HepG2 (cell line): ENCODE measurements at regions of chr19 and their contacts with region 1.

Region 1: GRCh38 chr19:50357178-50358100 is 8.0 kb downstream of the NAPSA start:
- DNase-seq: peak; percentile 52
- ATAC-seq: peak; percentile 81
- H3K4me3 ChIP-seq: peak overlapping the region; percentile 39 to 72 (median 56); a peak in 5 of 6 replicates
- H3K27ac ChIP-seq: no peak overlapping the region
- H3K4me1 ChIP-seq: peaks cover 11% of the 10 kb centered on the region; the same call in 1 of the 2 replicates
- H3K27me3 ChIP-seq: no peaks in the 10 kb centered on the region
- CTCF ChIP-seq: peak; percentile 91
- EP300 ChIP-seq: no peak
- POLR2A ChIP-seq: no peak
- RAD21 ChIP-seq: peak; percentile 82

Region 2: GRCh38 chr19:50266896-50267295 is 90.5 kb before region 1 on chr19:
- CTCF ChIA-PET with region 1: no interaction called
- POLR2A ChIA-PET with region 1: no interaction called
- in situ Hi-C with region 1: no loop called
- intact Hi-C with region 1: no loop called
- DNase-seq: no peak
- ATAC-seq: peak; percentile 24; the same call in 2 of the 3 replicates
- H3K4me3 ChIP-seq: no peak overlapping the region
- H3K27ac ChIP-seq: no peak overlapping the region
- H3K4me1 ChIP-seq: peaks cover 12% of the 10 kb centered on the region
- H3K27me3 ChIP-seq: no peaks in the 10 kb centered on the region
- CTCF ChIP-seq: no peak
- EP300 ChIP-seq: no peak
- POLR2A ChIP-seq: no peak
- RAD21 ChIP-seq: no peak

Region 3: DNA sequence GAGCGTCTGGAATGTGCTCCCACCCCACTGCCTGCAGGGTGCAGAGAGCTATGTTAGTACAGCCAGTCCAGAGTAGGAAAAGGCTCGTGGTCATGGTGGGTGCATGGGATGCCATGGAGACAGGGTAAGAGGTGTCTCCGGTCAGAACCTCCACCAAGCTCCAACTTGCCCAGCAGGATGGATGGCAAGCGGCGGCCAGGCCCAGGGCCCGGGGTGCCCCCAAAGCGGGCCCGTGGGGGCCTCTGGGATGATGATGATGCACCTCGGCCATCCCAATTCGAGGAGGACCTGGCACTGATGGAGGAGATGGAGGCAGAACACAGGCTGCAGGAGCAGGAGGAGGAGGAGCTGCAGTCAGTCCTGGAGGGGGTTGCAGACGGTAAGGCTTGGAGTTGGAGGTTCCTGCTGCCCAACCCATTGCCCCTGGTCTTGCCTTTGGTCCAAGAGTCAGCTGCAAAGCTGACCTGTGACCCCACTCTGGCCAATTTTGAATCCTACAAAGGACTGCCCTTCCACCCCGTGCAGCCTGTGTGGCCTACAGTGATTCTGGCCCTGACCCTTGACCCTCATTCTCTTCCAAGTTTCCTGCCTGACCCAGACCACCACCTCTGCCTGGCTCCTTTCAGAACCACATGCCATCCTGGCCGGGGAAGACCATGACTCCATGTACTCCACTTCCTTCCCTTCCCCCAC is 41.4 kb after region 1 on chr19:
- CTCF ChIA-PET with region 1: no interaction called
- POLR2A ChIA-PET with region 1: no interaction called
- in situ Hi-C with region 1: no loop called
- intact Hi-C with region 1: no loop called
- DNase-seq: no peak
- ATAC-seq: peak; percentile 24; the same call in 1 of the 3 replicates
- H3K4me3 ChIP-seq: no peak overlapping the region
- H3K27ac ChIP-seq: no peak overlapping the region
- H3K4me1 ChIP-seq: peaks cover 8% of the 10 kb centered on the region
- H3K27me3 ChIP-seq: no peaks in the 10 kb centered on the region; a peak in 1 of 5 replicates
- CTCF ChIP-seq: no peak
- EP300 ChIP-seq: no peak
- POLR2A ChIP-seq: no peak
- RAD21 ChIP-seq: no peak

Region 4: DNA sequence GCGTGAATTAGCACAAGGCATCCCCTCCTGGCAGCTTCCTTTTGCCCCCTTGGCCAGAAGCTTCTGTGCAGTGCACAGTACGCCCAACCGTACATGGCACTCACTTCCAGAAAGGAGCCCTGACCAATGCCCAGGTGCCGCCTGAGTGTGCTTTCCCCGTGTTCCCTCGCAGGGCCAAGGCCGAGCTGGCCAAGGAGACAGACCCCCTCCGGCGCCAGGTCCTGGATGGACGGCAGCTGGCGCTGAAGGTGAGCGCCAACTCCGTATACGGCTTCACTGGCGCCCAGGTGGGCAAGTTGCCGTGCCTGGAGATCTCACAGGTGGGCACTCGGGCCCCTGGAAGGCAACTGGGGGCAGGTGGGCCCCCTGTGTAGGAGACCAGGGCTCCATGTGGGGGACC is 51.9 kb after region 1 on chr19:
- CTCF ChIA-PET with region 1: no interaction called
- POLR2A ChIA-PET with region 1: no interaction called
- in situ Hi-C with region 1: no loop called
- intact Hi-C with region 1: no loop called
- DNase-seq: no peak
- ATAC-seq: no peak
- H3K4me3 ChIP-seq: no peak overlapping the region
- H3K27ac ChIP-seq: no peak overlapping the region
- H3K4me1 ChIP-seq: peaks cover 14% of the 10 kb centered on the region
- H3K27me3 ChIP-seq: no peaks in the 10 kb centered on the region
- CTCF ChIP-seq: no peak
- EP300 ChIP-seq: no peak
- POLR2A ChIP-seq: no peak
- RAD21 ChIP-seq: no peak

Region 5: DNA sequence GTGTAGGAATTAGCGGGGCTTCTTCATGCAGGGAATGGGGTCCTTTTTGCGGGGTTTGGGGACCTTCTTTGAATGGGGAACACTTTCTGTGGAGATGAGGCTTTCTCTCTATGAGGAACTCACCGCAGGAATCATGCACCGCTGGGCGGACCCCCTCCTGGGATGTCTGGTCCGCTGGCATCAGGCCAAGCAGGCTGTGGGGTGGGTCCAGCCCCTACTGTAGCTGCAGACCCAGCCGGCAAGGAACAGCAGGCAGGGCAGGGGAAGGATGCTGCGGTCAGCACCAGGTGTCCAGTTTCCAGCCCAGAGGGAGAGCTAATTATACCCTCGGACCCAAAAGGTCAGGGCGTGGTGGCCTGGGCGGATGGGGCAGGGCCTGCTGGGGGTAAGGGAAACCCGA is 77.1 kb after region 1 on chr19:
- CTCF ChIA-PET with region 1: no interaction called
- POLR2A ChIA-PET with region 1: no interaction called
- in situ Hi-C with region 1: no loop called
- intact Hi-C with region 1: no loop called
- DNase-seq: no peak
- ATAC-seq: no peak
- H3K4me3 ChIP-seq: no peak overlapping the region
- H3K27ac ChIP-seq: no peak overlapping the region
- H3K4me1 ChIP-seq: peaks cover 10% of the 10 kb centered on the region
- H3K27me3 ChIP-seq: peaks cover 10 to 29% of the 10 kb centered on the region in 2 experiments; a peak in 4 of 5 replicates
- CTCF ChIP-seq: no peak
- EP300 ChIP-seq: no peak
- POLR2A ChIP-seq: no peak
- RAD21 ChIP-seq: no peak

Region 6: DNA sequence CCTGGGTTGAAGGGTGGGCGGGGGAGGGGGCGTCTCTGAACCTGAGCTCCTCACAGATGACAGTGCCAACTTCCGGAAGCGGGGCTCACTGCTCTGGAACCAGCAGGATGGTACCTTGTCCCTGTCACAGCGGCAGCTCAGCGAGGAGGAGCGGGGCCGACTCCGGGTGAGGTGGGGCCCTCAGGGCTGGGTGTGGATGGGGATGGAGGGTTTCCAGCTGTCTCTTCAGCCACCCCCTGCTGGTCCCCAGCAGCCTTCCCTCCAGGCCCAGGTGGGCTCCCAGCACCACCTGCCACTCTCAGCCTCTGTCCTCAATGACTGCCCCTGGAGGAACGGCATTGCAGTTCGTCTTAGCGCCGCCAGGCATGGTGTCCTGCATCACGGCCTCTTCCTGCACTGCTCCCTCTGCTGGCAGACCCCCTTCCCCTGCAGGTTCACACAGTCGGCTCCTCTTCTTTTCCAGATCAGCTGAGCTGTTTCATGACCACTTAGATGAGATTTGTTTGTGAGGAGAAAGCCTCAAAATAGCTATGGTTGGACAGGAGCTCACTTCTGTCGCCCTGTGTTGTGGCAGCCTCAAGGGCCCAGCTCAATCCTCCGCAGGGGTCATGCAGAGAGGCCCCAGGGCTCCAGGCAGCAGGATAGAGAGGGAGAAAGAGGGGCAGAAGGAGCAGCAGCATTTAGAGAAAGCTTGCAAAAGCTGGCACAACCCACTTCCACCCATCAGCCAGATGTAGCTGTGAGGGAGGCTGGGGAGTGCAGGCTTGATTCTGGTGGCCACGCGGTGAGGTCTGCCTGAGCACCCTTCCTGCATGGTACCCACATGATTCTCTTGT is 121.7 kb after region 1 on chr19:
- CTCF ChIA-PET with region 1: interaction called, 21 read pairs
- POLR2A ChIA-PET with region 1: no interaction called
- in situ Hi-C with region 1: no loop called
- intact Hi-C with region 1: loop called (anchors 1 kb)
- DNase-seq: peak; percentile 81
- ATAC-seq: peak; percentile 93
- H3K4me3 ChIP-seq: no peak overlapping the region
- H3K27ac ChIP-seq: no peak overlapping the region
- H3K4me1 ChIP-seq: no peaks in the 10 kb centered on the region
- H3K27me3 ChIP-seq: peaks cover 4 to 8% of the 10 kb centered on the region in 2 experiments; a peak in 3 of 5 replicates
- CTCF ChIP-seq: peak; percentile 92
- EP300 ChIP-seq: no peak
- POLR2A ChIP-seq: no peak
- RAD21 ChIP-seq: peak; percentile 88